Caco-2 (cell line): ENCODE measurements at regions of chr16 and their contacts with region 1.

Region 1: GRCh38 chr16:53892155-53892554 is 188.2 kb downstream of the FTO start:
- DNase-seq: peak; percentile 69 to 82
- H3K4me3 ChIP-seq: no peak overlapping the region
- H3K4me3 Mint-ChIP-seq: no peak overlapping the region
- H3K27ac Mint-ChIP-seq: no peak overlapping the region
- H3K4me1 ChIP-seq: peaks cover 45% of the 10 kb centered on the region
- H3K4me1 Mint-ChIP-seq: peaks cover 42% of the 10 kb centered on the region
- H3K27me3 ChIP-seq: no peaks in the 10 kb centered on the region
- H3K27me3 Mint-ChIP-seq: no peaks in the 10 kb centered on the region
- CTCF ChIP-seq: peak; percentile 79 to 82

Region 2: GRCh38 chr16:53692142-53692541 is 200.0 kb before region 1 on chr16:
- CTCF ChIA-PET with region 1: no interaction called
- POLR2A ChIA-PET with region 1: no interaction called
- intact Hi-C with region 1: loop called (anchors 2 kb)
- DNase-seq: peak; percentile 58 to 73
- H3K4me3 ChIP-seq: no peak overlapping the region
- H3K4me3 Mint-ChIP-seq: no peak overlapping the region
- H3K27ac Mint-ChIP-seq: no peak overlapping the region
- H3K4me1 ChIP-seq: peaks cover 3% of the 10 kb centered on the region; the same call in 1 of the 2 replicates
- H3K4me1 Mint-ChIP-seq: no peaks in the 10 kb centered on the region
- H3K27me3 ChIP-seq: no peaks in the 10 kb centered on the region
- H3K27me3 Mint-ChIP-seq: no peaks in the 10 kb centered on the region
- CTCF ChIP-seq: peak; percentile 74 to 75

Region 3: GRCh38 chr16:53865494-53865863 is 26.7 kb before region 1 on chr16:
- CTCF ChIA-PET with region 1: no interaction called
- POLR2A ChIA-PET with region 1: no interaction called
- intact Hi-C with region 1: no loop called
- DNase-seq: no peak
- H3K4me3 ChIP-seq: no peak overlapping the region
- H3K4me3 Mint-ChIP-seq: no peak overlapping the region
- H3K27ac Mint-ChIP-seq: no peak overlapping the region
- H3K4me1 ChIP-seq: no peaks in the 10 kb centered on the region
- H3K4me1 Mint-ChIP-seq: peaks cover 8% of the 10 kb centered on the region
- H3K27me3 ChIP-seq: no peaks in the 10 kb centered on the region
- H3K27me3 Mint-ChIP-seq: no peaks in the 10 kb centered on the region
- CTCF ChIP-seq: no peak

Region 4: GRCh38 chr16:53937161-53937880 is 45.2 kb after region 1 on chr16:
- CTCF ChIA-PET with region 1: no interaction called
- POLR2A ChIA-PET with region 1: no interaction called
- intact Hi-C with region 1: loop called (anchors 2 kb)
- DNase-seq: peak; percentile 40 to 70
- H3K4me3 ChIP-seq: no peak overlapping the region
- H3K4me3 Mint-ChIP-seq: no peak overlapping the region
- H3K27ac Mint-ChIP-seq: peak overlapping the region; percentile 7
- H3K4me1 ChIP-seq: peaks cover 31% of the 10 kb centered on the region
- H3K4me1 Mint-ChIP-seq: peaks cover 33% of the 10 kb centered on the region
- H3K27me3 ChIP-seq: no peaks in the 10 kb centered on the region
- H3K27me3 Mint-ChIP-seq: no peaks in the 10 kb centered on the region
- CTCF ChIP-seq: no peak

Region 5: GRCh38 chr16:54062361-54063278 is 170.5 kb after region 1 on chr16:
- CTCF ChIA-PET with region 1: no interaction called
- POLR2A ChIA-PET with region 1: no interaction called
- intact Hi-C with region 1: loop called (anchors 5 kb)
- DNase-seq: peak; percentile 45 to 54
- H3K4me3 ChIP-seq: no peak overlapping the region
- H3K4me3 Mint-ChIP-seq: no peak overlapping the region
- H3K27ac Mint-ChIP-seq: peak overlapping the region; percentile 56
- H3K4me1 ChIP-seq: peaks cover 28% of the 10 kb centered on the region
- H3K4me1 Mint-ChIP-seq: peaks cover 43% of the 10 kb centered on the region
- H3K27me3 ChIP-seq: no peaks in the 10 kb centered on the region
- H3K27me3 Mint-ChIP-seq: no peaks in the 10 kb centered on the region
- CTCF ChIP-seq: no peak

Region 6: GRCh38 chr16:54286090-54286993 is 394.2 kb after region 1 on chr16 and contains the start of gene IRX3:
- CTCF ChIA-PET with region 1: interaction called, 7 read pairs
- POLR2A ChIA-PET with region 1: no interaction called
- intact Hi-C with region 1: loop called (anchors 1 kb)
- DNase-seq: peak; percentile 90 to 95
- H3K4me3 ChIP-seq: peak within 1 kb of the TSS; percentile 83
- H3K4me3 Mint-ChIP-seq: peak within 1 kb of the TSS; percentile 85
- H3K27ac Mint-ChIP-seq: peak within 1 kb of the TSS; percentile 79
- H3K4me1 ChIP-seq: 0 out of 2 replicates have a peak, but pooled peaks cover 5% of the 10 kb centered on the region
- H3K4me1 Mint-ChIP-seq: peaks cover 7% of the 10 kb centered on the region
- H3K27me3 ChIP-seq: no peaks in the 10 kb centered on the region
- H3K27me3 Mint-ChIP-seq: no peaks in the 10 kb centered on the region
- CTCF ChIP-seq: no peak
- total RNA-seq, gene IRX3: 63.2 and 73.3 TPM in 2 replicates

Region 7: GRCh38 chr16:54546521-54546920 is 654.4 kb after region 1 on chr16:
- CTCF ChIA-PET with region 1: no interaction called
- POLR2A ChIA-PET with region 1: no interaction called
- intact Hi-C with region 1: loop called (anchors 10 kb)
- DNase-seq: no peak
- H3K4me3 ChIP-seq: no peak overlapping the region
- H3K4me3 Mint-ChIP-seq: no peak overlapping the region
- H3K27ac Mint-ChIP-seq: no peak overlapping the region
- H3K4me1 ChIP-seq: peaks cover 7% of the 10 kb centered on the region; the same call in 1 of the 2 replicates
- H3K4me1 Mint-ChIP-seq: peaks cover 16% of the 10 kb centered on the region
- H3K27me3 ChIP-seq: no peaks in the 10 kb centered on the region
- H3K27me3 Mint-ChIP-seq: no peaks in the 10 kb centered on the region
- CTCF ChIP-seq: no peak

Region 8: DNA sequence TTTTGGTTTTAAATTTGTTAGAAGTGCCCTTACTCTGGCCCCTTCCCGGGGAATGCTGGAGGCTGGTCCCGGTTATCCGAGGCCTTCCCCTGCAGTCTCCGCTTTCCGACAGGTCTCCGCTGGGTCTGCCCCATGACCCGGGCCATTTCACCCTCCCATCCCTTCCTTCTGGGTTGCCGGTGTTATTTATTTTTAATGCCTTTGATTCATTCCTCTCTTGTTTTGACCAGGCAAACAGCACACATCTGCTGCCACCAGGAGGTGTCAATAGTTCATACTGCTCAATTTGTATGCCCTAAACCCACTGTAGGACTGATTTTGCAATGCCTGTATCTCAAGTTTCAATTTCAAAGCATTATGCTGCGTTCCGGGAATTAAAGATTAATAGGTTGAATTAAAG is 925.3 kb after region 1 on chr16:
- CTCF ChIA-PET with region 1: no interaction called
- POLR2A ChIA-PET with region 1: no interaction called
- intact Hi-C with region 1: loop called (anchors 10 kb)
- DNase-seq: peak in 1 of 2 experiments; percentile 35
- H3K4me3 ChIP-seq: no peak overlapping the region
- H3K4me3 Mint-ChIP-seq: no peak overlapping the region
- H3K27ac Mint-ChIP-seq: peak overlapping the region; percentile 82
- H3K4me1 ChIP-seq: peaks cover 20% of the 10 kb centered on the region
- H3K4me1 Mint-ChIP-seq: peaks cover 23% of the 10 kb centered on the region
- H3K27me3 ChIP-seq: no peaks in the 10 kb centered on the region
- H3K27me3 Mint-ChIP-seq: no peaks in the 10 kb centered on the region
- CTCF ChIP-seq: peak; percentile 38 to 72